Activated CD4-positive, alpha-beta T cell treated with anti-CD3 and anti-CD28 coated beads for 36 hours (primary cell): ENCODE measurements at regions of chr22 and their contacts with region 1.

Region 1: GRCh38 chr22:19854778-19855503 is at the starts of genes GNB1L and RTL10:
- DNase-seq: peak; percentile 98
- ATAC-seq: peak; percentile 93
- H3K4me3 Mint-ChIP-seq: peak within 1 kb of the TSS; percentile 89
- H3K27ac Mint-ChIP-seq: peak within 1 kb of the TSS; percentile 97
- H3K4me1 Mint-ChIP-seq: peaks cover 51% of the 10 kb centered on the region
- H3K27me3 Mint-ChIP-seq: no peaks in the 10 kb centered on the region
- total RNA-seq, gene GNB1L: 7.6 to 12.4 TPM
- total RNA-seq, gene RTL10: 14.9 to 15.6 TPM

Region 2: GRCh38 chr22:19178656-19179496 is 676.1 kb before region 1 on chr22 and contains the start of gene SLC25A1:
- CTCF ChIA-PET with region 1: no interaction called
- POLR2A ChIA-PET with region 1: no interaction called
- intact Hi-C with region 1: loop called in 1 of 2 experiments (anchors 1 kb)
- DNase-seq: peak; percentile 93
- ATAC-seq: peak; percentile 82
- H3K4me3 Mint-ChIP-seq: peak within 1 kb of the TSS; percentile 75
- H3K27ac Mint-ChIP-seq: peak within 1 kb of the TSS; percentile 19
- H3K4me1 Mint-ChIP-seq: peaks cover 27% of the 10 kb centered on the region
- H3K27me3 Mint-ChIP-seq: no peaks in the 10 kb centered on the region
- total RNA-seq, gene SLC25A1: 48.5 to 52.8 TPM

Region 3: DNA sequence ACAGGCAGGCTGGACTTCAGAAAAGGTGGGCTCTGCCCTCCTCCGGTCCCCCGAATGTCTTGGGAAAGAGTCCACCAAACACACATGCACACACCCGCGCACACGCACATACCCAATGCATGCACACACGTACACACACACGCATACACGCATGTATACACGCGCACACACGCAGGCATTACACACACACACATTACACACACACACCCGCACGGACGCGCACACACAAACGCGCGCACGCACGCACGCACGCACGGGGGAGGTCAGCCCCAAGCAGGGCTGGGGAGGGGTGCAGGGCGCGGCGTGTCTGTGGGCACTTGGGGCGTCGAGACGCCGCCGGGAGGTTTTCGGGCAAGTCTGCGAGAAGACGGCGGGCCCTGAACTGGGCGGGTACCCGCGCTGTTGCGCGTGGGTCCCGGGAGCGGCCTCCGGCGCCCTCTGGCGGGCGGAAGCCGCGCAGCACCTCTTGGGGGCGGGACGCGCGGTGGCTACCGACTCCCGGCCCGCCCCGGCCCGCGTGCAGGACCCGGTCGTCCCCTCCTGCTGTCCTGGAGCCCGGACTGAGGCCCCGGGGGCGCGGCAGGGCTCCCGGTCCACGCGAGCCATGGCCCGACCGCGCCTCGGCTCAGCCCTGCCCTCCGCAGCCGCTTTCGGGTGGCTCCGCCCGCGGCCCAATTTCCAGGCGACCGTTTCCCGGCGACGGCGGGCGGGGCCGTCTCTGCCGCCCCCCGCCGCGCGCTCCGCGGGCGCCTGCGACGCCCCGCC is 137.1 kb before region 1 on chr22:
- CTCF ChIA-PET with region 1: no interaction called
- POLR2A ChIA-PET with region 1: no interaction called
- intact Hi-C with region 1: loop called in 1 of 2 experiments (anchors 1 kb)
- DNase-seq: peak; percentile 87
- ATAC-seq: peak; percentile 92
- H3K4me3 Mint-ChIP-seq: peak overlapping the region; percentile 63
- H3K27ac Mint-ChIP-seq: no peak overlapping the region
- H3K4me1 Mint-ChIP-seq: peaks cover 11% of the 10 kb centered on the region
- H3K27me3 Mint-ChIP-seq: peaks cover 29% of the 10 kb centered on the region

Region 4: DNA sequence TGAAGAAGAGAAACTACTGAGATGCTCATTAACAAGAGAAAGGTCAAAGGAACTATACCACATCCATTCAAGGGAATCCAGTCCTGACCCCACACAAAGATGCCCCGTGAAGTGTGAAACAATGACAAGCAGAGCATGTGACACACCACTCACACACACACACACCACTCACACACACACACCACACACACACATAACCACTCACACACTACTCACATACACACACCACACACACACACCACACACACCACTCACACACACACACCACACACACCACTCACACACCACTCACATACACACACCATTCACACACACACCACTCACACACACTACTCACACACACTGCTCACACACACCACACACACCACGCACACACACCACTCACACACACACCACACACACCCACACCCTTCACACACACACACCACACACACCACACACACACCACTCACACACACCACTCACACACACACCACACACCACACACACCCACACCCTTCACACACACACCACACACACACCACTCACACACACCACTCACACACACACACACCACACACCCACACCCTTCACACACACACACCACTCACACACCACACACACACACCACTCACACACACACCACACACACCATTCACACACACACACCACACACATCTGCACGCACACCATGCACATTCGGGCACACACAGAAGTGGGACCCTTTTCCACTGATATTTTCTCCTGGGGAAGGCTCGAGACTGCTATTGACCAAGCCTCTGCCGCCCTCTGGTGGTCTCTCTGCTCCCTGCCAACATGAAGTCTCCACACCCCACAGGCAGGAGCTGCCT is 54.6 kb after region 1 on chr22:
- CTCF ChIA-PET with region 1: interaction called, 17 read pairs
- POLR2A ChIA-PET with region 1: interaction called, 5 read pairs
- intact Hi-C with region 1: no loop called
- DNase-seq: peak; percentile 92
- ATAC-seq: peak; percentile 92
- H3K4me3 Mint-ChIP-seq: no peak overlapping the region
- H3K27ac Mint-ChIP-seq: peak overlapping the region; percentile 45
- H3K4me1 Mint-ChIP-seq: peaks cover 8% of the 10 kb centered on the region
- H3K27me3 Mint-ChIP-seq: no peaks in the 10 kb centered on the region

Region 5: DNA sequence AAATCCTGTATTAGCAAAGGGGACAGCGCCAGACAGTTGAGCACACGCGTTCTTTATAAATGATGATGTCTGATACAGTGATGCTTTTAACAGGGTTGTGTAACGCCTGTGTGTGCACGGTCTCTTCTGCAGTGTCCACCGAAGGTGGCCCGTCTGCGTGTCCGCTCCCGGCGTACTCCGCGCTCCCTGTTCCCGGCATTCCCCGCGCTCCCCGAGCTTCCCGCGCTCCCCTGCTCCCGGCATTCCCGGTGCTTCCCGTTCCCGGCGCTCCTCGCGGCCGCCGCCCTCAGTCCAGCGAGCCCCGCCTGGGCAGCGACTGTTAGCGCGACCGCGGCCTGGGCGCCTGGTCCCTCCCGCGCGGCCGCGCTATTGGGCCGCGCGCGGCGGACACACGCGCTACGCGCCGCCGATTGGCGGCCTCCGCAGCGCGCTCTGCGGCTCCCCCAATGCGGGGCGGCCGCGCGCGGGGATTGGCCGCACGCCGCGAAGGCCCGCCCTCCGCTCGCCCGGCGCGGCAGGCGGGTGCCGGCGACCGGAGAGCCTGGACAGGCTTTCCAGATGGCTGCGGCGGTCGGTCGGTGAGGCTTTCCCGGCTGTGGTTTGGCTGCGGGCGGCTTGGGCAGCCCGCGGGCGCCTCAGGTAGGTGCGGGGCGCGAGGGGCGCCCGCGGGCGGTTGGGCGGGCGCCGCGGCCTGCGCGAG is 225.0 kb after region 1 on chr22 and contains the start of gene DGCR8:
- CTCF ChIA-PET with region 1: no interaction called
- POLR2A ChIA-PET with region 1: no interaction called
- intact Hi-C with region 1: loop called in 1 of 2 experiments (anchors 1 kb)
- DNase-seq: peak; percentile 78
- ATAC-seq: peak; percentile 92
- H3K4me3 Mint-ChIP-seq: peak within 1 kb of the TSS; percentile 88
- H3K27ac Mint-ChIP-seq: peak within 1 kb of the TSS; percentile 80
- H3K4me1 Mint-ChIP-seq: peaks cover 36% of the 10 kb centered on the region
- H3K27me3 Mint-ChIP-seq: no peaks in the 10 kb centered on the region
- total RNA-seq, gene DGCR8: 31.8 to 32.3 TPM

Region 6: GRCh38 chr22:20495861-20496681 is 641.1 kb after region 1 on chr22:
- CTCF ChIA-PET with region 1: no interaction called
- POLR2A ChIA-PET with region 1: no interaction called
- intact Hi-C with region 1: loop called in 1 of 2 experiments (anchors 10 kb)
- DNase-seq: peak; percentile 96
- ATAC-seq: peak; percentile 95
- H3K4me3 Mint-ChIP-seq: peak overlapping the region; percentile 76
- H3K27ac Mint-ChIP-seq: peak overlapping the region; percentile 70
- H3K4me1 Mint-ChIP-seq: peaks cover 29% of the 10 kb centered on the region
- H3K27me3 Mint-ChIP-seq: no peaks in the 10 kb centered on the region